Posterior vena cava (tissue), 2 donors: ENCODE measurements at regions of chr17 and their contacts with region 1.

Region 1: DNA sequence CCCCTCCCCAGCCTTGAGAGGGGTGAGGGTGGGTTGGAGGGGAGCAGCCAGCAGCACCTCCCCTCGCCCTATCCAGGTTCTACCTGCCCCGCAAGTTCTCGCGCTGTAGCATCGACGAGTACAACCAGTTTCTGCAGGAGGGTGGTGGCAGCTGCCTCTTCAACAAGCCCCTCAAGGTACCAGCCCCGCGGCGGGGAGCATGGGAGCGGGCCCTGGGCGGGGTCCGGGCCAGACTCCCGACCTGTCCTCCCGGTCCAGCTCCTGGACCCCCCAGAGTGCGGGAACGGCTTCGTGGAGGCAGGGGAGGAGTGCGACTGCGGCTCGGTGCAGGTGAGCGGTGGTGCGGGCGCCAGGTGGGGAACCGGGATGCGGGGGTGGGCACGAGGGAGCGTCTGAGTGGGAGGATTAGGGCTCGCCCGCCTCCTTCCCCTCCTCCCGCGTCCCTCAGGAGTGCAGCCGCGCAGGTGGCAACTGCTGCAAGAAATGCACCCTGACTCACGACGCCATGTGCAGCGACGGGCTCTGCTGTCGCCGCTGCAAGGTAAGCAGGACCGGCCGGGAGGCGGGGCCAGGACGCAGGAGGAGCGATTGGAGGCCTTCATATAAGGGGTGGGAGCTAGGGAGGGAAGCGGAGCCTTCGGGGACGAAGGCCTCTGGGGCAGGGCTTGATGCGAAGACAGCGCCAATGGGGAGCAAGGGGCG is 16.5 kb downstream of the ADAM11 start:
- DNase-seq: peak; percentile 98

Region 2: GRCh38 chr17:44487170-44487569 is 288.1 kb before region 1 on chr17:
- intact Hi-C with region 1: no loop called
- DNase-seq: no peak

Region 3: DNA sequence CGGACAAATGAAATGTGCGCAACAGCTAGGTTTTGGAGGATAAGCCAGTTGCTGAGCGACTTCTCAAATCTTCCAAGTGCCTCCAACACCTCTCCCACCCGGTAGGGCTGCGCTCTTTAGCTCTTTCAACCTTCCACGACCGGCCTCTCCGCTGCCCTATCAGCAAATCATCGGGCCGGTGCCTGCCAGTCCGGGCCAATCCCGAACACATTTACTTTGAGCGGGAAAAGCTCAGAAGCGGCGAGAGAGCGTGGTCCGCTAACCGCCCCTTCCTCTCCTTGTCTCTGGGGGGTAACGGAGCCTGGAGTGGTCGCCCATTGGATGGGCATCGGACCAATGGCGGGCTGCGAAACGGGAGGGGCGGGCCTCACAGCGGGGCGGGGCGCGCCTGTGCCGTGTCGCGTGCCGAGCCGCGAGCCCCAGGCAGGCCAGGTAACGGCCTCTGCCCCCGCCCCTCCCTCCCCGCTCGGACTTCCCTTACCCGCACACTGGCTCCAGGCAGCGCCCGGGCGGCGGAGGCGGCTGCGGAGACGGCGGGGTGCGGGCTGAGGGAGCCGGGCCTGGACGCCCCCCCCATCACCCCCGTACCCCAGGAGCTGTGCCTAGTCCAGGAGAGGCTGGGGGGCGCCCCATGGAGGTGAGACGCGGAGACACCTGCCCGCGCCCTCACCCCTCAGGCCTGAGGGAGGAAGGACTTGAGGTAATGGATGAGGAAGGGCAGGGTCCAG is 119.1 kb before region 1 on chr17 and contains the start of gene MEIOC:
- intact Hi-C with region 1: no loop called
- DNase-seq: no peak
- total RNA-seq, gene MEIOC: 0.10 TPM in 1 of 2 donors, not detected in the other

Region 4: GRCh38 chr17:44733753-44734152 is 41.5 kb before region 1 on chr17:
- intact Hi-C with region 1: no loop called
- DNase-seq: no peak

Region 5: GRCh38 chr17:44829523-44830358 is 54.5 kb after region 1 on chr17 and contains the start of gene GJC1:
- intact Hi-C with region 1: loop called in 1 of 2 experiments (anchors 2 kb)
- DNase-seq: peak; percentile 69
- total RNA-seq, gene GJC1: 30.4 to 80.8 TPM

Region 6: DNA sequence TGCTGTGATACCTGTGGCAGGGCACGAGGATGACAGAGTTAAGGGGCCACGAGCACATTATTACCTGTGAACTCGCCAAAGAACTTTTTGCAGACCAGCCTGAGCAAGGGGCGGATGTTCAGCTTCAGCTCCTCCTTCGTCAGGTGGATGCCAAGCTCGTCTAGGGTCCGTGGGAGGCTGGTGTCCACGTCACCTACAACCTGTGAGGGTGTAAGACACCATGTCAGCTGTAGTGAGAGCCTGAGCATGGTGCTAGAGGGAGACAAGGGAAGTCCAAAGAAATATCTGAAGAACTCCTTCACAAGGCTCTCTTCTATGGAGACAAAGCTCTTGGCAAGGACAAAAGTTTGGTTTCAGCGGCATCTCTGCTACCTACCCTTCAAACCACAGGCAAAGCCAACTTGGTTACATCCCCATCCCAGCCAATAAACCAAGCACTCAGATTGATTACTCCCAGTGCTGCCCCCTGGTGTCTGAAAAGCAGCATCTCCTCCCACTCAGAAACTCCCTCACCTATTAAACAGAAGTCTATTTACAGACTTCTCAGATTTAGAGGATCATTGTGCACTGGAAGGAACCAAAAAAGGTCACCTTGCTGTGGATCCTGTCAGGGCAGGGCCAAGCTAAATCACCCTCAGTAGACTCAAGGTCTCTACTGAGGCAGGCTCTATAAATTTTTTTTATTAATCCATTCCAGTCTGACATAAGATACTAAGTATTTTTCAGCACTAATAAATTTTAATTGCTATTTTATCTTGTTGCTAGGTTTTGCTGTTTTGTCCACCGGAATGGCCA is 89.8 kb after region 1 on chr17:
- intact Hi-C with region 1: loop called (anchors 5 kb)
- DNase-seq: no peak

Region 7: DNA sequence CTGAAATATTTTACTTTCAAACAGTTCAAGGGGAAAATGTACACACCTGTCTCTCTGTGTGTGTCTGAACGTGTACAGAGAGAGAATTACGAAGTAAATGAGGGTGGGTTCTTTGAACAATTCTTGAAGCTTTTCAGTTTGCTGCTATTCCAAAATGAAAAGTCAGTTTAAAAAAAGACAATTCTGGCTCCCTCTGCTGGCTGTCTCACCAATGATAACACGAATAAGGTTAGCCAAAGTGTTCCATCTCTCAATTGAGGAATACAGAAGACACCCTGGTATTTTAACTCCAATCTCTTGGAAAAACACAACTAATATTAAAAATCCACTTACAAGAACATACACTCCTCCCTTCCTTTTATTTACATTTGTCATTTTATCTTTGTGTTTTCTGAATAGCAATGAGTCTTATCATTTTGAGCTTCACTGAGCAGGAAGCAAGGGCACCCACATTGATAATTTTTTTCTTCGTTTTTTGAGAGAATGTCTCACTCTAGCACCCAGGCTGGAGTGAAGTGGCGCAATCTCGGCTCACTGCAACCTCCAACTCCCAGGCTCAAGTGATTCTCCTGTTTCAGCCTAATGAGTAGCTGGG is 103.4 kb after region 1 on chr17:
- intact Hi-C with region 1: loop called in 1 of 2 experiments (anchors 5 kb)
- DNase-seq: no peak

Region 8: GRCh38 chr17:45021607-45022287 is 246.5 kb after region 1 on chr17:
- intact Hi-C with region 1: loop called (anchors 10 kb)
- DNase-seq: peak; percentile 91